ENCODE measurements at regions of chr3 and their contacts with region 1.

Region 1: GRCh38 chr3:12719984-12720898 is 38.8 kb downstream of the TMEM40 start:
- DNase-seq: peak; percentile 46 to 89 (median 71)
- ATAC-seq: peak; percentile 99
- H3K4me3 ChIP-seq: no peak overlapping the region
- H3K4me3 Mint-ChIP-seq: peak overlapping the region; percentile 69
- H3K27ac ChIP-seq: no peak overlapping the region
- H3K27ac Mint-ChIP-seq: no peak overlapping the region
- H3K4me1 ChIP-seq: peaks cover 4% of the 10 kb centered on the region
- H3K4me1 Mint-ChIP-seq: peaks cover 10% of the 10 kb centered on the region
- H3K27me3 ChIP-seq: peaks cover 0 to 3% of the 10 kb centered on the region in 2 experiments
- H3K27me3 Mint-ChIP-seq: no peaks in the 10 kb centered on the region
- CTCF ChIP-seq: peak; percentile 84

Region 2: GRCh38 chr3:12135029-12135657 is 585.1 kb before region 1 on chr3:
- CTCF ChIA-PET with region 1: interaction called, 9 read pairs
- POLR2A ChIA-PET with region 1: no interaction called
- intact Hi-C with region 1: loop called in 1 of 2 experiments (anchors 1 kb)
- DNase-seq: peak; percentile 12 to 66 (median 52)
- ATAC-seq: peak; percentile 75
- H3K4me3 ChIP-seq: no peak overlapping the region
- H3K4me3 Mint-ChIP-seq: no peak overlapping the region
- H3K27ac ChIP-seq: no peak overlapping the region
- H3K27ac Mint-ChIP-seq: no peak overlapping the region
- H3K4me1 ChIP-seq: no peaks in the 10 kb centered on the region
- H3K4me1 Mint-ChIP-seq: no peaks in the 10 kb centered on the region
- H3K27me3 ChIP-seq: no peaks in the 10 kb centered on the region
- H3K27me3 Mint-ChIP-seq: peaks cover 5% of the 10 kb centered on the region
- CTCF ChIP-seq: peak; percentile 63

Region 3: DNA sequence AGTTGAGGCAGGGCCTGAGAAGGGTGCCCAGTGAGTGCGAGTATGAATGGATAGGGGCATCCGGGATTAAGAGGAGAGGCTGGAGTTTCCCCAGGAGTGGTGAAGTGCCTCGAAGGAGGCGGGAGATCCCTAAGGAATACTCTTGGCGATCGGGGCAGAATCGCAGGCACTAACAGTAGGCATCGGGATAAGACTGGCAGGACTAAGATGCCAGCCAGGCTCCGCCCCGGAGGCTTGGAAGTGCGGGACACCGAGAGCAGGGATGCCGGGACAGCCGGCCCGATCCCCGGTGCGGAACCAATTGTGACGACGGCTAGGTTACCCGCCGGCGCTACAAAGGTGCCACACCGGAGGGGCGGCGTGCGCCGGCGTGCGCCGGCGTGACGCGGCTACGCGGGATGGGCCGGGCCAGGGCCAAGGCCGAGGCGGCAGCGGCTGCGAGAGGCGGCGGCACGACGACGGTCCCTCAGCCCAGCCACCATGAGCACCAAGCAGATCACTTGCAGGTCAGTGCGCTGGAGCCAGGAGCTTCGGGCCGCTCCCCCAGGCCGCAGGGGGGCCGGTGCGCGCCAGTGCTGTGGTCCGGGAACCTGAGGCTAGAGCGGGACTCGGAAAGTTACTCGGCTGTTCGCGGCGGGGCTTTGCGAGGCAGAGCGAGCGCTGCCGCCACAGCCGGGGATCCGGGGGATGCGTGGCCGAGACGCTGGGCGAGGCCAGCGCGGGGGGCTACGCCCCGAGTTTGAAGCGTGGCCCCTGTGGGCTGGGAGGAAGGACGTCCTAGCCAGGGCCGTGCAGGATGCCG is 163.4 kb before region 1 on chr3 and contains the start of gene MKRN2:
- CTCF ChIA-PET with region 1: interaction called, 4 read pairs
- POLR2A ChIA-PET with region 1: no interaction called
- intact Hi-C with region 1: loop called in 1 of 2 experiments (anchors 5 kb)
- DNase-seq: peak; percentile 67 to 94 (median 83)
- ATAC-seq: peak; percentile 93
- H3K4me3 ChIP-seq: peak within 1 kb of the TSS; percentile 73 to 86
- H3K4me3 Mint-ChIP-seq: peak within 1 kb of the TSS; percentile 89
- H3K27ac ChIP-seq: peak within 1 kb of the TSS; percentile 86 to 92
- H3K27ac Mint-ChIP-seq: peak within 1 kb of the TSS; percentile 90
- H3K4me1 ChIP-seq: peaks cover 49% of the 10 kb centered on the region
- H3K4me1 Mint-ChIP-seq: peaks cover 60% of the 10 kb centered on the region
- H3K27me3 ChIP-seq: peaks cover 6 to 16% of the 10 kb centered on the region in 2 experiments
- H3K27me3 Mint-ChIP-seq: peaks cover 24% of the 10 kb centered on the region
- CTCF ChIP-seq: no peak
- total RNA-seq, gene MKRN2: 24.8 to 25.5 TPM

Region 4: GRCh38 chr3:12601072-12601471 is 119.2 kb before region 1 on chr3:
- CTCF ChIA-PET with region 1: no interaction called
- POLR2A ChIA-PET with region 1: no interaction called
- intact Hi-C with region 1: loop called (anchors 5 kb)
- DNase-seq: no peak
- ATAC-seq: no peak
- H3K4me3 ChIP-seq: no peak overlapping the region
- H3K4me3 Mint-ChIP-seq: no peak overlapping the region
- H3K27ac ChIP-seq: no peak overlapping the region
- H3K27ac Mint-ChIP-seq: peak overlapping the region; percentile 57
- H3K4me1 ChIP-seq: no peaks in the 10 kb centered on the region
- H3K4me1 Mint-ChIP-seq: peaks cover under 1% of the 10 kb centered on the region
- H3K27me3 ChIP-seq: no peaks in the 10 kb centered on the region
- H3K27me3 Mint-ChIP-seq: no peaks in the 10 kb centered on the region
- CTCF ChIP-seq: no peak

Region 5: GRCh38 chr3:12706504-12707253 is 13.6 kb before region 1 on chr3:
- CTCF ChIA-PET with region 1: interaction called, 29 read pairs
- POLR2A ChIA-PET with region 1: no interaction called
- intact Hi-C with region 1: loop called in 1 of 2 experiments (anchors 2 kb)
- DNase-seq: peak; percentile 5 to 73 (median 53)
- ATAC-seq: peak; percentile 98
- H3K4me3 ChIP-seq: no peak overlapping the region
- H3K4me3 Mint-ChIP-seq: no peak overlapping the region
- H3K27ac ChIP-seq: no peak overlapping the region
- H3K27ac Mint-ChIP-seq: no peak overlapping the region
- H3K4me1 ChIP-seq: no peaks in the 10 kb centered on the region
- H3K4me1 Mint-ChIP-seq: no peaks in the 10 kb centered on the region
- H3K27me3 ChIP-seq: no peaks in the 10 kb centered on the region
- H3K27me3 Mint-ChIP-seq: peaks cover 7% of the 10 kb centered on the region
- CTCF ChIP-seq: peak; percentile 61

Region 6: GRCh38 chr3:12741209-12741608 is 21.0 kb after region 1 on chr3:
- CTCF ChIA-PET with region 1: no interaction called
- POLR2A ChIA-PET with region 1: no interaction called
- intact Hi-C with region 1: no loop called
- DNase-seq: no peak
- ATAC-seq: no peak
- H3K4me3 ChIP-seq: no peak overlapping the region
- H3K4me3 Mint-ChIP-seq: no peak overlapping the region
- H3K27ac ChIP-seq: no peak overlapping the region
- H3K27ac Mint-ChIP-seq: no peak overlapping the region
- H3K4me1 ChIP-seq: no peaks in the 10 kb centered on the region
- H3K4me1 Mint-ChIP-seq: no peaks in the 10 kb centered on the region
- H3K27me3 ChIP-seq: no peaks in the 10 kb centered on the region
- H3K27me3 Mint-ChIP-seq: peaks cover 8% of the 10 kb centered on the region
- CTCF ChIP-seq: no peak

Measured in CD8-positive, alpha-beta T cell (primary cell).